A673 (cell line): ENCODE measurements at regions of chr1 and their contacts with region 1.

Region 1: DNA sequence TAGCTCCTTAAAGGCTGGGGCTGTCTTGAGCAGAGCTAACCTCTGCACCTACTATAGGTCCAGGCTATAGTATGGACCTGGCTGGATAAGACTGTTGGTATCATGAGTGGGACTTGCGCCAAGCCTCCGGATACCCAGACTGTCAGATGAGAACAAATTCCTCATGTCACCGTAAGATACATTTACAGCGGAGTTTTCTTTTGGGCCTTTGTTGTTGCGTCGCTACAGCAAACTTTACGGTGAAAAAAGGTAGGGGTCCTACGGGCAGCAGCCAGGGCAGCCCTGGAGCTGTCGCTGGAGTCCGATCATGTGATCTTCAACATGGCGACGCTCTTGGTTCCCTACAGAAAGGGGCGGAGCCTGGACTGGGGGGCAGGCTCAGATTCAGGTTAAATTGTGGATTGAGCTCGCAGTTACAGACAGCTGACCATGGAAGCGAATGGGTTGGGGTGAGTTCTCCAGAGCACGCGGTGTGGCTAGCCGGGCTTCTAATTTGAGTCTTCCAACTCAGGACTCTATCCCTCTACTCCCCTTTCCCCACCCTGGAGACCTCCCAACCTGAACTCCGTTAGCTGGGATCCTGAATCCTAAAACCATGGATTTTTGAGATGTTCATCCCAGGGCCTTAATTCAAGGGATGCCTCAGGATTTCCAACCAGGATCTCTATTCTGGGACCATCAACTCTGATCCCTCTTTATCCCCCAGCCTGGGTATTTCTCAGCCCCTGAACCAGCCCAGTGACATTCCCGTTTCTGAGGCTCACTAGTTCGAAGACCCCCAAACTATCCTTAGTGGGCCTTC is at the start of gene UROD:
- DNase-seq: peak; percentile 97
- H3K4me3 ChIP-seq: peak within 1 kb of the TSS; percentile 85
- H3K27ac ChIP-seq: peak within 1 kb of the TSS; percentile 68
- H3K4me1 ChIP-seq: peaks cover 10% of the 10 kb centered on the region
- H3K27me3 ChIP-seq: no peaks in the 10 kb centered on the region
- CTCF ChIP-seq: no peak
- total RNA-seq, gene UROD: 85.8 and 89.3 TPM in 2 replicates

Region 2: GRCh38 chr1:44730741-44731512 is 281.1 kb before region 1 on chr1 and contains the start of gene RNU5D-1:
- CTCF ChIA-PET with region 1: no interaction called
- POLR2A ChIA-PET with region 1: no interaction called
- intact Hi-C with region 1: loop called (anchors 5 kb)
- DNase-seq: peak; percentile 98
- H3K4me3 ChIP-seq: no peak within 1 kb of the TSS
- H3K27ac ChIP-seq: peak within 1 kb of the TSS; percentile 99
- H3K4me1 ChIP-seq: peaks cover 4% of the 10 kb centered on the region
- H3K27me3 ChIP-seq: no peaks in the 10 kb centered on the region
- CTCF ChIP-seq: peak; percentile 90
- total RNA-seq, gene RNU5D-1: not detected in 2 replicates

Region 3: DNA sequence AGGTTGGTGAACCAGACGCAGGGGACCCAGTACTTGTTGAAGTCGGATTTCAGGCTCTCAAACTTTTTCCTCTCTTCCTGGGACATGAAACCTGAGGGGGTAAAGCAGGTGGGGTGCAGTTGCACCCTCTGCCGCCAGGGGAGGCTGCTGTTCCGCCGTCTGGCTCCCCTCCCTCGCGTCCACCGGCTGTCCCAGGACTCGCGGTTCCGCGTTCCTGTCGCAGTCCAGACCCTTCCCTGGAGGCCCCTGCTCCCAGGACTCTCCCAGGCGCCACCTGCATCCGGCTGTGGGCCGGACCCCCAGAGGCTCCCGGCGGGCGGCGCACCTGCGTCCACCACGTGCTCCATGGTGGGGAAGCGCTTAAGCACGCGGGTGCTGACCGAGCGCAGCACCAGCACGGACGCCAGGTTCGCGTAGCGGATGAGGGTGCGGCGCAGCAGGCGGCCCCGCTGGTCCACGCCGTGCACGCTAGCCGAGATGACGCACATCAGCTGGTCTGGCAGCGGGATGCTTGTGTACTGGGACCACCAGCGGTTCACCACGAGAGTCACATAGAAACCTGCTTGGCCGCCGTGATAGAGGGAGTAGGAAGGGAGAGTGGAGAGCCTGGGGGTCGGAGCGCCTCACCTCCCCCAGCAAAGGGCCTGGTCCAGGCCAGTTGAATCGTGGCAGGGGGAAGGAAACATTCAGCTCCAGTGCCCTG is 225.7 kb before region 1 on chr1:
- CTCF ChIA-PET with region 1: no interaction called
- POLR2A ChIA-PET with region 1: no interaction called
- intact Hi-C with region 1: loop called (anchors 5 kb)
- DNase-seq: peak; percentile 81
- H3K4me3 ChIP-seq: peak overlapping the region; percentile 41
- H3K27ac ChIP-seq: no peak overlapping the region
- H3K4me1 ChIP-seq: peaks cover 12% of the 10 kb centered on the region
- H3K27me3 ChIP-seq: no peaks in the 10 kb centered on the region
- CTCF ChIP-seq: peak; percentile 98

Region 4: GRCh38 chr1:45051005-45051772 is 39.2 kb after region 1 on chr1:
- CTCF ChIA-PET with region 1: no interaction called
- POLR2A ChIA-PET with region 1: no interaction called
- intact Hi-C with region 1: no loop called
- DNase-seq: no peak
- H3K4me3 ChIP-seq: no peak overlapping the region
- H3K27ac ChIP-seq: no peak overlapping the region
- H3K4me1 ChIP-seq: no peaks in the 10 kb centered on the region
- H3K27me3 ChIP-seq: no peaks in the 10 kb centered on the region
- CTCF ChIP-seq: no peak

Region 5: GRCh38 chr1:45205910-45206721 is 194.1 kb after region 1 on chr1 and contains the start of gene ZSWIM5:
- CTCF ChIA-PET with region 1: no interaction called
- POLR2A ChIA-PET with region 1: interaction called, 3 read pairs
- intact Hi-C with region 1: loop called (anchors 10 kb)
- DNase-seq: peak; percentile 57
- H3K4me3 ChIP-seq: peak within 1 kb of the TSS; percentile 57
- H3K27ac ChIP-seq: no peak within 1 kb of the TSS
- H3K4me1 ChIP-seq: no peaks in the 10 kb centered on the region
- H3K27me3 ChIP-seq: peaks cover 76% of the 10 kb centered on the region
- CTCF ChIP-seq: no peak
- total RNA-seq, gene ZSWIM5: 0.46 and 0.67 TPM in 2 replicates

Region 6: DNA sequence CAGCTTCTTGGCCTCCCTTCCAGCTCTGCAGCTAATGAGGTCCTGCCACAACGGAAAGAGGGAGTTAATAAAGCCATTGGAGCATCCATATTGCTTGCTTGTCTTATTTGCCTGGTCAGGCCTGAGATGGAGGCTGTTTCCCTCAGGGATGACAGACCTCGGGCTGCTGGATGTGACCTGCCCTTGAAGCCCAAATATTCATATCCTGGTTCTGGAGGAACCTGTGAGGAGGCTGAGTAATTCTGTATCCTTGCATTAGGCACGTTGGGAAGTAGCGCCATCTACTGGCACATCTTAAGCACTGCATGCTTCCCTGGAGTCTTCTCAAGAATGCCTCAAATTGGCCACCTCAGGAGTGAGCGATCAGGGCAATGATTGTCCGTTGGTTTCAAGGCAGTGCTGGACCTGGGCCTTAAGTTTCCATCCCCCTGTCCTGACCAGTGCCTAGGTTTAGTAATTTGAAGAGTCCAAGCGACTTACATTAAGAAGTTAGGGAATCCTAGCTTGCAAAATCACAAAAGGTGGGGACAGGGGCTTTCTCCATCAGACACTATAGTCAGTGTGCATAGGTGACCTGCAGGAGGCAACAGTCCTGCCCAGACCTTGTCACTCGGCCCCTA is 558.0 kb after region 1 on chr1:
- CTCF ChIA-PET with region 1: no interaction called
- POLR2A ChIA-PET with region 1: no interaction called
- intact Hi-C with region 1: loop called (anchors 10 kb)
- DNase-seq: peak; percentile 79
- H3K4me3 ChIP-seq: no peak overlapping the region
- H3K27ac ChIP-seq: no peak overlapping the region
- H3K4me1 ChIP-seq: no peaks in the 10 kb centered on the region
- H3K27me3 ChIP-seq: no peaks in the 10 kb centered on the region
- CTCF ChIP-seq: peak; percentile 98